Activated naive CD4-positive, alpha-beta T cell treated with anti-CD3 and anti-CD28 coated beads for 36 hours (primary cell): ENCODE measurements at regions of chr6 and their contacts with region 1.

Region 1: DNA sequence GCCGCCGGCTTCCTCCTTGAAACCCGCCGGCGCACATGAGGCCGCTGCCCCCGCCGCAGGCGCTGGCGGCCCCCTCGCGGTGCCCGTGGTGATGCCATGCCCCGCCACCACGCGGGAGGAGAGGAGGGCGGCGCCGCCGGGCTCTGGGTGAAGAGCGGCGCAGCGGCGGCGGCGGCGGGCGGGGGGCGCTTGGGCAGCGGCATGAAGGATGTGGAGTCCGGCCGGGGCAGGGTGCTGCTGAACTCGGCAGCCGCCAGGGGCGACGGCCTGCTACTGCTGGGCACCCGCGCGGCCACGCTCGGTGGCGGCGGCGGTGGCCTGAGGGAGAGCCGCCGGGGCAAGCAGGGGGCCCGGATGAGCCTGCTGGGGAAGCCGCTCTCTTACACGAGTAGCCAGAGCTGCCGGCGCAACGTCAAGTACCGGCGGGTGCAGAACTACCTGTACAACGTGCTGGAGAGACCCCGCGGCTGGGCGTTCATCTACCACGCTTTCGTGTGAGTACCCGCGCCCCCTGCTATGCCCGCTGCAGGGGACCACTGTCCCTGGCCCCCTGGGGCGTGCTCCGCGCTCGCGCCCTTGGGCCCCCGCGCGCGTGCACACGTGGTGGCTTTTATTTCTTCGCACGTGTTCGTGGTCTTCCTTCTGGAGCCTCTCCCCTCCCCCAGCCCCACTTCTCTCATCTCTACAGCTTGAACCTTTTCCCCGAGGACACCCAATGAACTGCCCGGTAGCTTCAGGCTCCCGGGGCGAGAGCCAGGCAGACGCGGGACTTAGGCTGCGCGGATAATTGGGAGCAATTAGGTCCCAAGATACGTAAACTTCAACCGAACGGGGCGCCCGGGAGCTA is 453 bp downstream of the KCNQ5 start:
- DNase-seq: peak; percentile 57
- H3K4me3 Mint-ChIP-seq: peak overlapping the region; percentile 96
- H3K27ac Mint-ChIP-seq: peak overlapping the region; percentile 98
- H3K4me1 Mint-ChIP-seq: peaks cover 66% of the 10 kb centered on the region
- H3K27me3 Mint-ChIP-seq: no peaks in the 10 kb centered on the region

Region 2: GRCh38 chr6:71277926-71278600 is 1344.3 kb before region 1 on chr6:
- CTCF ChIA-PET with region 1: no interaction called
- intact Hi-C with region 1: no loop called
- DNase-seq: no peak
- H3K4me3 Mint-ChIP-seq: no peak overlapping the region
- H3K27ac Mint-ChIP-seq: no peak overlapping the region
- H3K4me1 Mint-ChIP-seq: no peaks in the 10 kb centered on the region
- H3K27me3 Mint-ChIP-seq: peaks cover 2% of the 10 kb centered on the region

Region 3: GRCh38 chr6:72553531-72554511 is 68.5 kb before region 1 on chr6:
- CTCF ChIA-PET with region 1: interaction called, 9 read pairs
- intact Hi-C with region 1: loop called (anchors 2 kb)
- DNase-seq: peak; percentile 16
- H3K4me3 Mint-ChIP-seq: no peak overlapping the region
- H3K27ac Mint-ChIP-seq: peak overlapping the region; percentile 22
- H3K4me1 Mint-ChIP-seq: peaks cover 15% of the 10 kb centered on the region
- H3K27me3 Mint-ChIP-seq: no peaks in the 10 kb centered on the region

Region 4: DNA sequence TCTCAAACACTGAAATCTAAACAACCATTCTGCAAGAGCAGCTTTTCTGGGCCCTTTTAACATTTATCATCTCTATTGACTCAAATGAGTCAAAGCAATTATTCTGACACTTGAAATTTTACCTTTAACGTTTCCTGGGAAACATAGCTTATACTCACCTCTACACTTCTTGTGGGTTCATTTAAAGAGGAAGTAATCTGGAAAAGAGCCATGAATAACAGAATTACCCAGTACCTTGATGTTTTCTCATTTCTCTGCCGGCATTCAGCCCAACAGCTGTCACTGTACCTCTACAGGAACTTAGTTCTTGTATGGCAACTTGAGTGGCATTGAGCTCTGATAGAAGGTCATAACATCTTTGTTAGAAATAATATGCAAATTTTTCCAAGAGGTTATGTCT is 271.8 kb after region 1 on chr6:
- CTCF ChIA-PET with region 1: no interaction called
- intact Hi-C with region 1: no loop called
- DNase-seq: no peak
- H3K4me3 Mint-ChIP-seq: no peak overlapping the region
- H3K27ac Mint-ChIP-seq: no peak overlapping the region
- H3K4me1 Mint-ChIP-seq: no peaks in the 10 kb centered on the region
- H3K27me3 Mint-ChIP-seq: no peaks in the 10 kb centered on the region

Region 5: GRCh38 chr6:72950114-72950860 is 328.0 kb after region 1 on chr6:
- CTCF ChIA-PET with region 1: no interaction called
- intact Hi-C with region 1: loop called (anchors 5 kb)
- DNase-seq: no peak
- H3K4me3 Mint-ChIP-seq: no peak overlapping the region
- H3K27ac Mint-ChIP-seq: no peak overlapping the region
- H3K4me1 Mint-ChIP-seq: peaks cover 30% of the 10 kb centered on the region
- H3K27me3 Mint-ChIP-seq: no peaks in the 10 kb centered on the region

Region 6: DNA sequence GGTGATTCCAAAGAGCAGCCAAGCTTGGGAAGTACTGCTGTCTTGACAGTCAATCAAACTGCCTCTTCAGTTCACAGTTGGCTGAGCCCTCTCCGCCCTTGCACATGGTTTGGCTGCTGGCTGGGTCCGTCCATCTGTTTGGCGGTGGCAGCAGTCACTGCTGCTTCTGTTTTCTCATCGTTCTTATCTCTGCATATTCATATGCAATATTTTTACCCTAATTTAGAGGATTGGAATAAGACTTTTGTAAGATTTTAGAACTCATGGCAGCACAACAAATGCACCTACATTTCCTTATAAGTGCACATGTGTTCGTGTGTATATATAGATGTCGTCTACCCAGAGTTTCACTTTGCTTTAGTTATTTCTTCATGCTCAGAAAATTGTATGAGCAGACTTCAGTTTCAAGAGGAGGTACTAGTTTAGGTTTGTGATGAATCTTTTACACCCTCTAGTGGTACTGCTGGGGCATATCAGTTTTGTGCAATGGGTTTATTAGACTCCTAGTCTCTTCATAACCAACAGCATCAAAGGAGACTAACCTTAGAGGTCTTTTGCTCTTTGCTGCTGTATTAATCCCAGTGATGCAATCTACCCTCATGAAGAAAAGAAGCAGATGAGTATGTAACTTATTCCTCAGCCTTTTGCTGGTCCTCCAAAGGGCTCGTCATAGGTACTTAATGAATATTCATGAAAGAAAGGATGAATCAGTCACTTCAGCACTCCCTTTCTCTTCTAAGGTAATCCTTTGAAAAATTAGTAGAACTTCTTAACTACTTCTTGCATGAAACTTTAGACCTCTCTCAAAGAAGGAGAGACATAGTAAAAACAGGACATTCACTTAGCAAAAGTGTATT is 558.7 kb after region 1 on chr6:
- CTCF ChIA-PET with region 1: no interaction called
- intact Hi-C with region 1: loop called (anchors 1 kb)
- DNase-seq: peak; percentile 12
- H3K4me3 Mint-ChIP-seq: no peak overlapping the region
- H3K27ac Mint-ChIP-seq: no peak overlapping the region
- H3K4me1 Mint-ChIP-seq: peaks cover 4% of the 10 kb centered on the region
- H3K27me3 Mint-ChIP-seq: no peaks in the 10 kb centered on the region

Region 7: GRCh38 chr6:73461537-73462350 is 839.4 kb after region 1 on chr6 and contains the start of gene MTO1:
- CTCF ChIA-PET with region 1: no interaction called
- intact Hi-C with region 1: loop called (anchors 2 kb)
- DNase-seq: peak; percentile 92
- H3K4me3 Mint-ChIP-seq: peak within 1 kb of the TSS; percentile 94
- H3K27ac Mint-ChIP-seq: peak within 1 kb of the TSS; percentile 97
- H3K4me1 Mint-ChIP-seq: peaks cover 37% of the 10 kb centered on the region
- H3K27me3 Mint-ChIP-seq: no peaks in the 10 kb centered on the region
- total RNA-seq, gene MTO1: 38.7 to 47.1 TPM

Region 8: DNA sequence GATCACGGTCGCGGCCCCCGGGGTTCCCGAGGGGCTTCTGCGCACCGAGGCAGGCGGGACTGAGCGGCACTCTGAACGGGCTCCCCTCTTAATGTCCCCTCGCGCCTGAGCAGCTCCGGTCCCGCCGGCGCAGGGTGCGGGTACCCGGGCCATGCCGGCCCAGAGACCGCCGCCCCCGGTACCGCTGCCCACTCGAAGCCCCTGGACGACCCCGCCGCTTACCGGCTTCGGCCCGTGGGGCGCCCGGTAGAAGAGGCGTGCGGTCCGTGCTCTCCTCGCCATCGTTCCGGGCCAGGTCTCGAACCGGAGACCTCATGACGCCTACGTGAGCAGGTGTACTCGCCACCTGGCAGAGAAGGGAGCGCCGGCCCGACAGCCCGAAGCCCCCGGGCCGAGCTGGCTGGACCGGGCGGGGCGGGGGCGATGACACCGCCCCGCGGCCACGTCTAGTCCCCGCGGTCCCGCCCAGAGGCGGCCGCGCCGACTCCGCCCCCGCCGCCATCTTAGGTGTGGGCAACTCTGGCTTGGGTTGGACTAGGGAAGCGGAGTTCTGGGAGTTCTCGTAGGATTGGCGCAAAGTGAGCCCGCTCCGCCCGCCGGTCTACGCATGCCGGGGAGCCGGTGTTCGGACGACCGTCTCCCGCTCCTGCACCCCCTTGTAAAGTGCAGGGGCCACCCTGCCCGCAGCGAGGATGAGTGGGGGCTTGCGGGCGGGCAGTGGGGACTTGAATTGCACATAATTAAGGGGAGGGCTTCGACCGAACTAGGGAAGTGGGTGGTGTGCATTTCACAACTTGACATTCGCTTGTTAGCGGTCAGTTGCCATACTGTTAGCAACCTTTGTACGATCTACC is 1031.5 kb after region 1 on chr6 and contains the start of gene SLC17A5:
- CTCF ChIA-PET with region 1: no interaction called
- intact Hi-C with region 1: loop called (anchors 5 kb)
- DNase-seq: peak; percentile 92
- H3K4me3 Mint-ChIP-seq: peak within 1 kb of the TSS; percentile 97
- H3K27ac Mint-ChIP-seq: peak within 1 kb of the TSS; percentile 86
- H3K4me1 Mint-ChIP-seq: peaks cover 18% of the 10 kb centered on the region
- H3K27me3 Mint-ChIP-seq: no peaks in the 10 kb centered on the region
- total RNA-seq, gene SLC17A5: 1.7 to 2.0 TPM